ENCODE measurements at regions of chr1 and their contacts with region 1.

Region 1: GRCh38 chr1:16625497-16626408 is 12.4 kb upstream of the NBPF1 start:
- DNase-seq: no peak
- H3K4me3 Mint-ChIP-seq: no peak overlapping the region
- H3K27ac Mint-ChIP-seq: no peak overlapping the region
- H3K4me1 Mint-ChIP-seq: no peaks in the 10 kb centered on the region
- H3K27me3 Mint-ChIP-seq: no peaks in the 10 kb centered on the region

Region 2: DNA sequence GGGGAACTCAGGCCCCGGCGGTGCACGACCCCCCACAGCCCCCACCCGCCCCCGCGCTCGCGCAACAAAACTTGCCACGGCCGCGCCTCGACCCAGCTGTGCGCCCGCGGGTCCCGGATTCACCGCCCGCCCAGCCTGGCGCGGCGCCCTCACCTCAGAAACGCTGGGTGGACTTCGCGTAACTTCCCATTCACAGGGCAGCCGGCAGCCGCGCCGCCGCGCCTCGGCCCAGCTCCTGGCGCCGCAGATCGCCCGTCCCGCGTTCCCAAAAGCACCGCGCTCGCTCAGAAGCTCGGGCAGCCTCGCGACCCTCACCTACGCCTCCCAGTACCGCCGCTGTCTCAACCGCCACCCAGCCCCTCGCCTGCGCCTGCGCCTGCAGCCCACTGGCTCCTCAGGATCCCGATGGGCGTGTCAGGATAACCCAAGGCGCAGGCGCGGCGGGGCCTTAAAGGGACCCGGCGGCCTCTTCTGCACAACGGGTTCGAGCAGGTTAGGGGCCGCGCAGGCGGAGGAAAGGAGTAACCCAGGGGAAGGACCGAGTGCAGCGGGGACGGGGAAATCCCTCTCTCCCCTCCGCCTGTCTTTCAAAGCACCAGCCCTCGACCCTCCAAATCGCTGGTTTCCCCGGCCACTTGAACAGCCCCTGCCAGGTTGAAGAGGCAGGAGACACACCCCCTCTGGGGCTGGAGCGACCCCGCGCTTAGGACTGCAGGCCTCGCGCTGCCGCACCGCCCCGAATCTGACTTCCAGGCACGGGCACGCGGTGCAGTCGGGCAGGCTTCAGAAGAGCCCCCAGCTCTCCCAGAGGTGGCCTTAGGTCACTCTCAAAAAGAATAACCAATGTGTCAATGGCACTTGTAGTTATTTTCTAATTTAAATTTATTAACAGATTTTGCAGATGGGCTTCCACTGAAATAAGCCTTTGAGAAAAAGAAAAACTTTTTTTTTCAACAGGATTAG is 12.3 kb before region 1 on chr1 and contains the start of gene NBPF1:
- intact Hi-C with region 1: loop called (anchors 2 kb)
- DNase-seq: peak; percentile 82
- H3K4me3 Mint-ChIP-seq: no peak within 1 kb of the TSS
- H3K27ac Mint-ChIP-seq: no peak within 1 kb of the TSS
- H3K4me1 Mint-ChIP-seq: no peaks in the 10 kb centered on the region
- H3K27me3 Mint-ChIP-seq: no peaks in the 10 kb centered on the region
- total RNA-seq, gene NBPF1: 5.2 and 6.1 TPM in 2 replicates

Region 3: GRCh38 chr1:16644193-16644481 is 18.4 kb after region 1 on chr1:
- intact Hi-C with region 1: loop called (anchors 2 kb)
- DNase-seq: no peak
- H3K4me3 Mint-ChIP-seq: no peak overlapping the region
- H3K27ac Mint-ChIP-seq: no peak overlapping the region
- H3K4me1 Mint-ChIP-seq: no peaks in the 10 kb centered on the region
- H3K27me3 Mint-ChIP-seq: peaks cover 5% of the 10 kb centered on the region

Region 4: GRCh38 chr1:16946646-16947045 is 320.9 kb after region 1 on chr1:
- intact Hi-C with region 1: loop called (anchors 1 kb)
- DNase-seq: no peak
- H3K4me3 Mint-ChIP-seq: no peak overlapping the region
- H3K27ac Mint-ChIP-seq: no peak overlapping the region
- H3K4me1 Mint-ChIP-seq: no peaks in the 10 kb centered on the region
- H3K27me3 Mint-ChIP-seq: no peaks in the 10 kb centered on the region

Measured in activated T-helper 2 cell treated with anti-CD3 and anti-CD28 coated beads, Interferon-gamma antibody, Interleukin-2, Interleukin-4, amounts not matched to agents 10 μg/mL and 5 μg/mL and 100 μg/mL, durations not matched to agents 14 hours and 24 hours and 36 hours (primary cell).